Left ventricle myocardium superior (tissue), 1 donor: ENCODE measurements at regions of chr9 and their contacts with region 1.

Region 1: GRCh38 chr9:9091387-9091786 is 1291.8 kb upstream of the DMAC1 start:
- DNase-seq: no peak
- ATAC-seq: no peak

Region 2: GRCh38 chr9:8769153-8769552 is 322.2 kb before region 1 on chr9:
- intact Hi-C with region 1: no loop called
- DNase-seq: no peak
- ATAC-seq: no peak

Region 3: GRCh38 chr9:9170439-9171134 is 79.2 kb after region 1 on chr9:
- intact Hi-C with region 1: loop called (anchors 10 kb)
- DNase-seq: no peak
- ATAC-seq: no peak